Left ventricle myocardium superior (tissue), 1 donor: ENCODE measurements at regions of chr7 and their contacts with region 1.

Region 1: GRCh38 chr7:135801045-135801693 is 52.6 kb upstream of the FAM180A start:
- DNase-seq: no peak
- ATAC-seq: peak; percentile 73

Region 2: DNA sequence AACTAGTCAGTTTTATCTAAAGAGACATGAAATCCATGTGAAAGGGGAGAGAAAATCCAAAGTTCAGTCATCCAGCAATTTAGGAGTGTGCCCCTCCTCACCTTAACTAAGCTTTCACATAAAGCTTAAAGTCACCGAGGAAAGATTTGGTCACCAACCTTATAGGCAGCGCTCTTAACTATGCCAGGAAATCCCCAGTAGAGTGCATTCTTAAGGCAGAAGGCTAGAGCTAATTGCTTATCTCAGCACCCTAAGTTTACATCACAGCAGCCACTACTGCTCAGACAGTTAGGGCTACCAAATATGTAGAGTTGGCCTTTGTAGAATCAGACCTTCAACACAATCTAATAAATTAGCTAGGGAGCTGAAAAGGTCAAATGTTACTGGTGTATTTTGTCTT is 128.1 kb after region 1 on chr7:
- intact Hi-C with region 1: no loop called
- DNase-seq: no peak
- ATAC-seq: no peak

Region 3: GRCh38 chr7:136009488-136010079 is 208.4 kb after region 1 on chr7:
- intact Hi-C with region 1: loop called (anchors 2 kb)
- DNase-seq: no peak
- ATAC-seq: no peak